Activated CD4-positive, alpha-beta T cell treated with anti-CD3 and anti-CD28 coated beads, Interleukin-2, amount 10 ng/mL, durations not matched to agents 24 days and 14 days (primary cell): ENCODE measurements at regions of chr13 and their contacts with region 1.

Region 1: DNA sequence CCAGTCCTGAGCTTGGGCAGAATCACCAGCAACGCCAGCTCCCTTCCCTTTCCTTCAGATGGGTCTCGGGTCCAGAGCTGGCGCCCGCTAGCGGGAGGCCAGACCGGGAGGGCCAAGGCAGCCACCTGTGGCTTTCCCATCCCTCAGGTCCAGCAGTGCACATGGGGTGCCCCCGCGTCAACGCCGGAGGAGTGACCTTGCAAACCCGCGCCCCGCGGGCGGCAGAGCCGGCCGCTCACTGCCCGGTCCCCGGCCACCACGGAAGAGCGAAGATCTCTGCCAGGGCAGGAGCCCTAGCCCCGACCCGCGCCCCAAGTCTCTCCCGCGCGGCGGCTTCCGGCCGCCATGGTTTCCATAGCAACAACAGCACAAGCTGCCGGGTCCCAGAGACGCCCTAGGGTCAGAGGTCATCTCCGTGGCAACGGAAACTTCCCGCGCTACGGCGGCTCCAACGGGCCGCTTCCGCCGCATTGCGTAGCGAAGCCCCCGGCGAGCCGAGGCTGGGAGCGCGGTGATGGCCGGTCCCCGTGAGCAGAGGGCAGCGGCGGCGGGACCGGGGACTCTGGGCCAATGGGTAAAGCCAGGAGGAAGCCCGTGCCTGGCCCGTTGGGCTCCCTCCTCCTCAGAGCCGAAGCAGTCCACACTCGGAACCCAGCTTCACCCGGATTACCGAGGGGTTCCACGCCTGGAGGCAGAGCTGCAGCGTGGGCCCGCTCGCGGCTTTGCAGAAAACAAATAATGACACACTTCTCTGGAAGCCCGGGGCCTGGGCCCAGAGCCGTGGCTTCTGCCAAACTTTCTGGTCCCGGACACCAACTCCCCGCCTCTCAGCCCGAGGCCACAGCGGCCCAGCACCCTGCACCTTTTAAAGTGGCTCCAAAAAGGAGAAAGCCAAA is 7.4 kb downstream of the FGF14 start:
- DNase-seq: peak; percentile 99
- H3K4me3 Mint-ChIP-seq: peak overlapping the region; percentile 85
- H3K27ac Mint-ChIP-seq: peak overlapping the region; percentile 91
- H3K4me1 Mint-ChIP-seq: peaks cover 18% of the 10 kb centered on the region
- H3K27me3 Mint-ChIP-seq: peaks cover 24% of the 10 kb centered on the region

Region 2: GRCh38 chr13:100674848-100675660 is 1719.4 kb before region 1 on chr13:
- intact Hi-C with region 1: loop called (anchors 10 kb)
- DNase-seq: peak; percentile 100
- H3K4me3 Mint-ChIP-seq: peak overlapping the region; percentile 92
- H3K27ac Mint-ChIP-seq: peak overlapping the region; percentile 90
- H3K4me1 Mint-ChIP-seq: peaks cover 25% of the 10 kb centered on the region
- H3K27me3 Mint-ChIP-seq: peaks cover 18% of the 10 kb centered on the region

Region 3: GRCh38 chr13:102328909-102329308 is 65.5 kb before region 1 on chr13:
- intact Hi-C with region 1: no loop called
- DNase-seq: no peak
- H3K4me3 Mint-ChIP-seq: no peak overlapping the region
- H3K27ac Mint-ChIP-seq: no peak overlapping the region
- H3K4me1 Mint-ChIP-seq: no peaks in the 10 kb centered on the region
- H3K27me3 Mint-ChIP-seq: no peaks in the 10 kb centered on the region

Region 4: DNA sequence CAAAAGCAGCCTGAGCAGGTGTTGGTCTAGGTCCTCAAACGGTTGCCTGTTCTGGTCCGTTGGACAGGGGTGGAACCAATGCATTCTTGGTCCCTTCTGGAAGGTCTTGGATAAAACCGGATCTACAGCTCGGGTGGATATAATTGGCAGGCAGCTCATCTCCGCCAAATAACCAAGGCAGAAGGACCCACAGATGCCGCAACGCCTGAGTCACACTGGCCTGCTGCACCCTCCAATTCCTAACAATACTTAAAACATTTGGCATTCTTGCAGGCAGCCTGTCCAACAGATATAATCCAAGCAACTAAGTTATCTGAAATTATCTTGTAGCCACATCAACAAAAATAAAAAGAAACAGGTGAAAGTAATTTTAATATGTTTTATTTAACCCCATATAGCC is 66.4 kb after region 1 on chr13:
- intact Hi-C with region 1: loop called (anchors 2 kb)
- DNase-seq: no peak
- H3K4me3 Mint-ChIP-seq: no peak overlapping the region
- H3K27ac Mint-ChIP-seq: no peak overlapping the region
- H3K4me1 Mint-ChIP-seq: peaks cover 5% of the 10 kb centered on the region
- H3K27me3 Mint-ChIP-seq: peaks cover 8% of the 10 kb centered on the region

Region 5: DNA sequence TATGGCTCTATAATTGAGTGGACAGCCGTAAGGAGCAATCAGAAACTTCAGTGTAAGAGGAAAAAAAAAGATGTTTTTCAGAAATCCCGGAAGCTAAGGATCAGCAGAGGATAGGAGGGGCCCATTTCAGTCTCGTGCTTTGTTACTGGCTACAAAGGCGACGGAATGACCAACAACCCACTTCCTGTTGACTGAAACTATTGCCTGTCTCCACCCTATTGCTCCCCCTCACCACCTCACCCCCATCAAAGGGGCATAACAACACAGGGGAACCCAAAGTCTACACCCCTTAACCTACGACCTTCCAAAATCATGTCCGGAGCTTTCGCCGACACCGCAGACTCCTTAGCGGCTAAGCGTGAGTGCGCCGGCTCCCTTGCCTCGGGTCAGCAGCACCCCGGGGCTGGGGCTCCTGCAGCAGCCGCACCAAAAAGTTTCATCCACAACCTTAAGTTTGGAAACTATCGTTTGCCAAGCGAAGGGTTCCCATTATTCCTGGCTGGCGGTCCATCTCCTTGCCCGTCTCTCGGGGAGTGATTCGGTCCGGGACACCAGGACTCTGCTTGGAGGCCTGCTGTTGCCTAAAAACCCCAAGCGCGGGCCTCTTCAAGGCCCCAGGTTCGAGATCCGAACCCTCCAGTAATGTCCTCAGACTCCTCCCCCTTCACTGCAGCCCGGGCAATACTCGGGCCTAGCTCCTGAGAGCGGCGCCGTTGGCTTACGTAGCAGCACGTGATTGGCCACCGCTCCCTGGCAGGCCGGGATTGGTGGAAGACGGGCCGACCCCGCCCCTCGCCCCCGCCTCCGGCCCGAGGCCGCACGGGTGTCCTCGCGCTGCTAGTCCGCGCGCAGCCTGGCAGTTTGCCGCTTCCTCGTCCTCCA is 202.0 kb after region 1 on chr13 and contains the start of gene TPP2:
- intact Hi-C with region 1: loop called (anchors 2 kb)
- DNase-seq: peak; percentile 100
- H3K4me3 Mint-ChIP-seq: peak within 1 kb of the TSS; percentile 97
- H3K27ac Mint-ChIP-seq: peak within 1 kb of the TSS; percentile 99
- H3K4me1 Mint-ChIP-seq: peaks cover 48% of the 10 kb centered on the region
- H3K27me3 Mint-ChIP-seq: no peaks in the 10 kb centered on the region
- total RNA-seq, gene TPP2: 77.3 and 80.0 TPM in 2 replicates

Region 6: GRCh38 chr13:102845630-102846260 is 451.3 kb after region 1 on chr13 and contains the start of gene ERCC5:
- intact Hi-C with region 1: loop called (anchors 1 kb)
- DNase-seq: peak; percentile 99
- H3K4me3 Mint-ChIP-seq: peak within 1 kb of the TSS; percentile 99
- H3K27ac Mint-ChIP-seq: peak within 1 kb of the TSS; percentile 99
- H3K4me1 Mint-ChIP-seq: peaks cover 35% of the 10 kb centered on the region
- H3K27me3 Mint-ChIP-seq: peaks cover 3% of the 10 kb centered on the region
- total RNA-seq, gene ERCC5: 39.4 and 47.4 TPM in 2 replicates